PC-9 (cell line): ENCODE measurements at regions of chr5 and their contacts with region 1.

Region 1: GRCh38 chr5:175729829-175730277 is 72.0 kb downstream of the HRH2 start:
- DNase-seq: peak; percentile 77 to 95
- H3K4me3 ChIP-seq: no peak overlapping the region
- H3K27ac ChIP-seq: no peak overlapping the region
- H3K4me1 ChIP-seq: no peaks in the 10 kb centered on the region
- H3K27me3 ChIP-seq: no peaks in the 10 kb centered on the region
- CTCF ChIP-seq: peak; percentile 98

Region 2: GRCh38 chr5:175162036-175162435 is 567.8 kb before region 1 on chr5:
- CTCF ChIA-PET with region 1: no interaction called
- POLR2A ChIA-PET with region 1: no interaction called
- intact Hi-C with region 1: no loop called
- DNase-seq: no peak
- H3K4me3 ChIP-seq: no peak overlapping the region
- H3K27ac ChIP-seq: no peak overlapping the region
- H3K4me1 ChIP-seq: no peaks in the 10 kb centered on the region
- H3K27me3 ChIP-seq: peaks cover 27% of the 10 kb centered on the region
- CTCF ChIP-seq: no peak

Region 3: GRCh38 chr5:175478384-175479124 is 251.3 kb before region 1 on chr5 and contains the start of gene SFXN1:
- CTCF ChIA-PET with region 1: no interaction called
- POLR2A ChIA-PET with region 1: no interaction called
- intact Hi-C with region 1: no loop called
- DNase-seq: peak in 1 of 2 experiments; percentile 76
- H3K4me3 ChIP-seq: peak within 1 kb of the TSS; percentile 98
- H3K27ac ChIP-seq: no peak within 1 kb of the TSS
- H3K4me1 ChIP-seq: peaks cover 7% of the 10 kb centered on the region
- H3K27me3 ChIP-seq: peaks cover 31% of the 10 kb centered on the region
- CTCF ChIP-seq: no peak
- total RNA-seq, gene SFXN1: 43.6 and 61.4 TPM in 2 replicates

Region 4: DNA sequence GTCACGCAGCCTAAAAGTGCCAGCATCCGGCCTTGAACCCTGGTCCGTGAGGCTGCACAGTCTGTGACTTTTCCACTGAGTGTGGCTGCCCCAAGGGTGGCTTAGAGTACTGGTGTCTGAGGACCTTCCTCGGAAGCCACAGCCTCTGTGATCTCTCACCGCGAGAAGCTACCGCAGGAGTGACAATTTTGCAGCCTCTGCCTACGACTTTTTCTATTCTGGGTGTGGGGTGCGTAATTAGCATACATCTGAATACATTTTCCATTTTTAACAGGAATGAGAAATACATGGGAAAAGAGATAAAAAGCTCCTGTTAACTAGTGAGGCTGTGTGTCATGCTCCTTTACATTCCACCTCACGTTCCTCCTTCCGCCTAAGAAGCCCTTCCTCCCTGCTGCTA is 120.3 kb before region 1 on chr5:
- CTCF ChIA-PET with region 1: interaction called, 14 read pairs
- POLR2A ChIA-PET with region 1: no interaction called
- intact Hi-C with region 1: no loop called
- DNase-seq: no peak
- H3K4me3 ChIP-seq: no peak overlapping the region
- H3K27ac ChIP-seq: no peak overlapping the region
- H3K4me1 ChIP-seq: no peaks in the 10 kb centered on the region
- H3K27me3 ChIP-seq: peaks cover 99% of the 10 kb centered on the region
- CTCF ChIP-seq: no peak

Region 5: GRCh38 chr5:175696139-175696854 is 33.6 kb before region 1 on chr5:
- CTCF ChIA-PET with region 1: no interaction called
- POLR2A ChIA-PET with region 1: no interaction called
- intact Hi-C with region 1: no loop called
- DNase-seq: peak in 1 of 2 experiments; percentile 8
- H3K4me3 ChIP-seq: no peak overlapping the region
- H3K27ac ChIP-seq: no peak overlapping the region
- H3K4me1 ChIP-seq: no peaks in the 10 kb centered on the region
- H3K27me3 ChIP-seq: peaks cover 96% of the 10 kb centered on the region
- CTCF ChIP-seq: peak; percentile 59

Region 6: DNA sequence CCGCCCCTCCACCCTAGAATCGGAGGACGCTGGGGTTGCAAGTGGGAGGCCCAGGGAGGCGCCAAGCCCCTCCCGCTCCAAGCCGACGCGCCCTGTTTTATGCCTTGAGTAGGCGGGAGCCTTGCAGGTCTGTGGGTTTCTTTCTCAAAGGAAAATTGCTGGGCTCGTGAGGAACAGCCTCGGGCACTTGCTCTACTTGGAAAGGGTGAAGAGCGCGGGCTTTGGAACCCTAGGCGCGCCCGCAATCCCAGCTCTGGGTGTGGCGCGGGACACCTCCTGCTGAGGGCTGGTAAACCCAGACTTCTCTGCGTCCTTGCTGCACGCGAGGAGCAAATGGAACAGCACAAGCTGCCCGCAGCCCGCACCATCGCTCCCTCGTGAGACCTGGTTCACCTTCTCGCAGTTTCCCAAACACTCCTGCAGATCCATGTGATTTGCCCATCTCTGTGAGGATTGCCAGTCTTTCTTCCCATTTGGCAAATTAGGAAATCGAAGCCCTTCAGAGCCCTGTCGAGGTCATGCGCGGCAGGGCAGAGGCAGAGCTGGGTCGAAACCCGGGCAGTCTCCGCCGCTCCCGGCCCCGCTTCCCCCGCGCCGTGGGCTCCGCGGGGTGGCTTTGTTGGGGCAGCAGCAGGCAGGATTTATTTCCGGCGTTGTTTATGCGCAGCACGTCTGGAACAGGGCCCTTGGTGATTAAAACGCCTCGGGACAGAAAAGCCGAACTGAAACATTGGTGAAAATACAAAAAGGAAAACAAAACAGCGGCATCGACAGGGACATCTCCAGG is 43.1 kb after region 1 on chr5:
- CTCF ChIA-PET with region 1: no interaction called
- POLR2A ChIA-PET with region 1: no interaction called
- intact Hi-C with region 1: no loop called
- DNase-seq: no peak
- H3K4me3 ChIP-seq: no peak overlapping the region
- H3K27ac ChIP-seq: no peak overlapping the region
- H3K4me1 ChIP-seq: no peaks in the 10 kb centered on the region
- H3K27me3 ChIP-seq: no peaks in the 10 kb centered on the region
- CTCF ChIP-seq: no peak

Region 7: GRCh38 chr5:175867587-175868347 is 137.9 kb after region 1 on chr5:
- CTCF ChIA-PET with region 1: no interaction called
- POLR2A ChIA-PET with region 1: no interaction called
- intact Hi-C with region 1: loop called (anchors 5 kb)
- DNase-seq: no peak
- H3K4me3 ChIP-seq: no peak overlapping the region
- H3K27ac ChIP-seq: peak overlapping the region; percentile 21
- H3K4me1 ChIP-seq: peaks cover 28% of the 10 kb centered on the region
- H3K27me3 ChIP-seq: no peaks in the 10 kb centered on the region
- CTCF ChIP-seq: peak; percentile 65